Esophagus squamous epithelium (tissue), 5 donors: ENCODE measurements at regions of chr10 and their contacts with region 1.

Region 1: DNA sequence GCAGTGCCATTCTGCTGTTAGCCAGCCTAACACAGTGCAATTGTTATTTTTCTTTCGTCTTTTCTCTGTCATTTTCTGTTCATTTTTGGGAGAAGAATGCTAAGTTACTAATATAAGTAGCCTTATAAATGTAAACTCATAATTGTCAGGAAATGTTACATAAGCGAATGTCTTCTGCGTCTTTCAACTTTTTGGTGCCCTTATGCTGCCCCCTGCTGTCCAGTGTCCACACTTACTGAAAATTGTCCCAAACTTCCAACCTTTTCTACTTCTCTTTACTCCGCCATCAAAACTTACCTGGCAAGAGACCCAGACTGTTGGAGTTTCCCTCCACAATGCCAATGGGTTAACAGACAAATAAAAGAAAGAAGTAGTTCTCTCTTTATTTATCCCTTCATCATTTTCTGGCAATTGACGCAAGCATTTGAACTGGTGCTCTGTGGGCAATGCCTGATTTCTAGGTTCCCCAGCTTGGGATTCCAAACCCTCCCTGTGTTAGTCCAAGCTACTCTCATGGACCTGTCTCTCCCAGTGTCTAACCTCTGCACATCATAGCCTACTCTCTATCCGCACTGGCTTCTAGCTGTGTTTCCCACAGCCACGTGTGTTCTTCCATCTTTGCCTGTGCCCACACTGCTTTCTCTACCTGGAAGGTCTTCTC is 21.0 kb upstream of the EPC1 start:
- DNase-seq: no peak
- H3K4me3 ChIP-seq: peak overlapping the region in 1 of 4 donors; percentile 30
- H3K27ac ChIP-seq: no peak overlapping the region
- H3K4me1 ChIP-seq: peaks cover 0 to 43% (median 0%) of the 10 kb centered on the region in 3 donors
- H3K27me3 ChIP-seq: no peaks in the 10 kb centered on the region
- CTCF ChIP-seq: peak; percentile 69 to 81 (median 75)
- POLR2A ChIP-seq: no peak

Region 2: GRCh38 chr10:32190890-32191491 is 176.9 kb before region 1 on chr10:
- intact Hi-C with region 1: loop called (anchors 10 kb)
- DNase-seq: no peak
- H3K4me3 ChIP-seq: no peak overlapping the region
- H3K27ac ChIP-seq: no peak overlapping the region
- H3K4me1 ChIP-seq: peaks cover 0 to 5% (median 0%) of the 10 kb centered on the region in 3 donors
- H3K27me3 ChIP-seq: no peaks in the 10 kb centered on the region
- CTCF ChIP-seq: peak; percentile 45 to 76 (median 74)
- POLR2A ChIP-seq: no peak

Region 3: GRCh38 chr10:32279795-32280194 is 88.1 kb before region 1 on chr10:
- intact Hi-C with region 1: no loop called
- DNase-seq: no peak
- H3K4me3 ChIP-seq: no peak overlapping the region
- H3K27ac ChIP-seq: no peak overlapping the region
- H3K4me1 ChIP-seq: peaks cover 0 to 5% (median 0%) of the 10 kb centered on the region in 3 donors
- H3K27me3 ChIP-seq: no peaks in the 10 kb centered on the region
- CTCF ChIP-seq: no peak
- POLR2A ChIP-seq: no peak

Region 4: GRCh38 chr10:32481606-32482005 is 113.7 kb after region 1 on chr10:
- intact Hi-C with region 1: no loop called
- DNase-seq: no peak
- H3K4me3 ChIP-seq: no peak overlapping the region
- H3K27ac ChIP-seq: no peak overlapping the region
- H3K4me1 ChIP-seq: no peaks in the 10 kb centered on the region
- H3K27me3 ChIP-seq: no peaks in the 10 kb centered on the region
- CTCF ChIP-seq: no peak
- POLR2A ChIP-seq: no peak